Left ventricle myocardium inferior (tissue), 1 donor: ENCODE measurements at regions of chr6 and their contacts with region 1.

Region 1: GRCh38 chr6:53484476-53485280 is 60.2 kb downstream of the GCLC start:
- DNase-seq: no peak
- H3K4me3 ChIP-seq: peak overlapping the region; percentile 29
- H3K27ac ChIP-seq: peak overlapping the region; percentile 86
- H3K4me1 ChIP-seq: peaks cover 34% of the 10 kb centered on the region
- H3K27me3 ChIP-seq: no peaks in the 10 kb centered on the region
- CTCF ChIP-seq: peak; percentile 99

Region 2: GRCh38 chr6:53171605-53172446 is 312.9 kb before region 1 on chr6:
- intact Hi-C with region 1: loop called (anchors 2 kb)
- DNase-seq: peak; percentile 86
- H3K4me3 ChIP-seq: no peak overlapping the region
- H3K27ac ChIP-seq: no peak overlapping the region
- H3K4me1 ChIP-seq: peaks cover 9% of the 10 kb centered on the region
- H3K27me3 ChIP-seq: no peaks in the 10 kb centered on the region
- CTCF ChIP-seq: peak; percentile 100

Region 3: DNA sequence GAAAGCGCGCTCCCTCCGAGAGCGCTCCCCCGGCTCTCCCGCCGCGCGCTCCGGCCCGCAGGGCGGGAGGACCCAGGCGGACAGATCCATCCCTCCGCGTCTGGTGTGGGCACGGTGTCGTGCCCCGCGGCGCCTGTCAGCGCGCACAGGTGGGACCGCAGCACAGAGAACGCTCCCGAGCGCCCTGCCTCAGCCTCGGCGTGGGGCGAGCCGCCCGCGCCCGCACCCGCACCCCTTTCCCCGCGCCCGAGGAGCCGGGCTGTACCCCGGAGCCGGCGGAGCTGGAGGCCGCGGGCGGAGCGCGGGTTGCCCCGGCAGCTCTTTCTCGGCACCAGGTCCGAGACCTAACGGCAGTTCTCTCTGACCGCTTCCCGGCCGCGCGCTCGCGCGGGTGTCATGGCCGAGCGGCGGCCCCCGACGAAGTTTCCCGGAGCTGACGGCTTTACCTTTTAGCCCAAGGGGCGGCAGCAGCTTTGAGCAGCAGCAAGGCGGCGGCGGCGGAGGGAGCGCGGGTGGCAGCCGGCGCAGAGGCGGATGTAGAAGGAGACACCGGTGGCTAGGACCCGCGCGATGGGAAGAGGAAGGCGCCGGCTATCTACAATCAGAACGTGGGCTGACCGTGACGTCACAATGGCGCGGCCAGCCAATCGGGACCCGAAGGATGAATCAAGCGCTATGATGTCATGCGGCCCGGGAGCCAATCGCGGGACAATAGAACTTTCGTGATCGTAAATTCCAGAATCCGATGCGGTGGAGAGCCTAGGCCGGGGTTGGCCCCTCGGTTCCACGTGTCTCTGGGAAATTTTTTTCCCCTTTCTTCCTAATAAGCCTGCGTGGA is 136.1 kb before region 1 on chr6 and contains the start of gene ELOVL5:
- intact Hi-C with region 1: loop called (anchors 10 kb)
- DNase-seq: peak; percentile 98
- H3K4me3 ChIP-seq: peak within 1 kb of the TSS; percentile 99
- H3K27ac ChIP-seq: peak within 1 kb of the TSS; percentile 98
- H3K4me1 ChIP-seq: peaks cover 39% of the 10 kb centered on the region
- H3K27me3 ChIP-seq: no peaks in the 10 kb centered on the region
- CTCF ChIP-seq: peak; percentile 42
- total RNA-seq, gene ELOVL5: 19.0 TPM

Region 4: GRCh38 chr6:53408826-53409225 is 75.9 kb before region 1 on chr6:
- intact Hi-C with region 1: no loop called
- DNase-seq: no peak
- H3K4me3 ChIP-seq: no peak overlapping the region
- H3K27ac ChIP-seq: no peak overlapping the region
- H3K4me1 ChIP-seq: peaks cover 8% of the 10 kb centered on the region
- H3K27me3 ChIP-seq: no peaks in the 10 kb centered on the region
- CTCF ChIP-seq: no peak

Region 5: DNA sequence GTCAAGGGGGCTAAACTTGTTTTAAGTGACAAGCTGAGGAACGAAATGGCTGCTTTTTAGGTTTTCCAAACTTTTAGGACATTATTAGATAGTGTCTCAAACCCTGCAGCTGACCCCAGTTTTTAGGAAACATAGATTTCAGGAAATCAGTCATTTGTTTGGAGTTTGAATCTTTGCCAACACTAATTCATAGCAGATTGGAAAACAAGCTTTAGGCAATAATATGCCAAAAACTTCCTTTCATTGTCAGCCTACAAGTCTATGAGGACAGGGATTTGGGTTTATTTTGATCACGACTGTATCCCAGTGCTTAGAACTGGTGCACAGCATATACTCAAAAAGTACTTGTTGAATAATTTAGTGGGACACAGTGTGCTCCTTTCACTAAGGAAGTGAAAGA is 946.8 kb after region 1 on chr6:
- intact Hi-C with region 1: no loop called
- DNase-seq: no peak
- H3K4me3 ChIP-seq: no peak overlapping the region
- H3K27ac ChIP-seq: no peak overlapping the region
- H3K4me1 ChIP-seq: no peaks in the 10 kb centered on the region
- H3K27me3 ChIP-seq: no peaks in the 10 kb centered on the region
- CTCF ChIP-seq: no peak